Calu3 (cell line): ENCODE measurements at regions of chr16 and their contacts with region 1.

Region 1: GRCh38 chr16:69286941-69287713 is 24.0 kb upstream of the VPS4A start:
- DNase-seq: peak; percentile 56
- H3K4me3 Mint-ChIP-seq: no peak overlapping the region
- H3K27ac Mint-ChIP-seq: no peak overlapping the region
- H3K4me1 Mint-ChIP-seq: no peaks in the 10 kb centered on the region
- H3K27me3 Mint-ChIP-seq: no peaks in the 10 kb centered on the region
- CTCF ChIP-seq: peak; percentile 76

Region 2: DNA sequence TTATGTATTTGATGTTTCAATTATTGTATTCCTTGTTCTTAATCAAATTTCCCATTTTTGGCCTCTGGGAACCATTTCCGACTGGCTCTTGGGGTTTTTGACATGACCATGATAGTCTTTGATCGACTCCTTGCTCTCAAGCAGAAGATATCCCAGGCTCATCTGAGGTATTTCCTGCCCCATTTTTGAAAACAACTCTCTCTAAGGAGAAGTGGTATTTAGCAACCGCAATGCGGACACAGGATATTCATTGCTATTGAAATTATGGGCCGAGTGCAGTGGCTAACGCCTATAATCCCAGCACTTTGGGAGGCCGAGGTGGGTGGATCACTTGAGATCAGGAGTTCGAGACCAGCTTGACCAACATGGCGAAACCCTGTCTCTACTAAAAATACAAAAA is 438.3 kb before region 1 on chr16:
- CTCF ChIA-PET with region 1: interaction called, 3 read pairs
- intact Hi-C with region 1: loop called (anchors 5 kb)
- DNase-seq: no peak
- H3K4me3 Mint-ChIP-seq: no peak overlapping the region
- H3K27ac Mint-ChIP-seq: no peak overlapping the region
- H3K4me1 Mint-ChIP-seq: peaks cover 8% of the 10 kb centered on the region
- H3K27me3 Mint-ChIP-seq: no peaks in the 10 kb centered on the region
- CTCF ChIP-seq: no peak

Region 3: DNA sequence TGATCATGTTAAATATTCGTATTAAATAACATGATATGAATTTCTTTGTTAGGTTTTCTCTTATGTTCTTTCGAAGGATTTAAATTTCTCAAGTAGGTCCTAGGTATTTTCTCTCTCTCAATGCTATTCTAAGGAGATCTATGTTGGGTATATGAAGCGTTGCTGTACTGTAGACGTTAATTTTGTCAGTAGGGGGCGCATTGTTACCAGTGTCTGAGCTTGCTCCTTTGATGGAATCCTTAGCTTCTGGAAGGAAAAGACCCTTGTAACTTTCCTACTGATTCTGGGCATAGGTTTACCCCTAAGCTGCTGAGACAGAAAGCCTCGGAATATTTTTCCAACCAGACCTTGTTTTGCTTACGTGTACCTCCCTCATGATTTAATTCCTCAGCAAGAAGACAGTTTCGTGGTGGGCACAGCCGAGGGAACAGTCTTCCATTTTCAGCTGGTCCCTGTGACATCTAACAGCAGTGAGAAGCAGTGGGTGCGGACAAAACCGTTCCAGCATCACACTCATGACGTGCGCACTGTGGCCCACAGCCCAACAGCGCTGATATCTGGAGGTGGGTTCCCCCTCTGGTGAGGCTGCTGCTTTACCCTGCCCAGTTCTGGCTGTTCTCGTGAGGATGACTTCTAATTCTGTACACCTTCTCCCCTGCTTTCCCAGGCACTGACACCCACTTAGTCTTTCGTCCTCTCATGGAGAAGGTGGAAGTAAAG is 136.8 kb before region 1 on chr16:
- CTCF ChIA-PET with region 1: interaction called, 12 read pairs
- intact Hi-C with region 1: loop called (anchors 1 kb)
- DNase-seq: peak; percentile 68
- H3K4me3 Mint-ChIP-seq: no peak overlapping the region
- H3K27ac Mint-ChIP-seq: no peak overlapping the region
- H3K4me1 Mint-ChIP-seq: no peaks in the 10 kb centered on the region
- H3K27me3 Mint-ChIP-seq: no peaks in the 10 kb centered on the region
- CTCF ChIP-seq: peak; percentile 61